Motor neuron (in vitro differentiated cells): ENCODE measurements at regions of chr11 and their contacts with region 1.

Region 1: DNA sequence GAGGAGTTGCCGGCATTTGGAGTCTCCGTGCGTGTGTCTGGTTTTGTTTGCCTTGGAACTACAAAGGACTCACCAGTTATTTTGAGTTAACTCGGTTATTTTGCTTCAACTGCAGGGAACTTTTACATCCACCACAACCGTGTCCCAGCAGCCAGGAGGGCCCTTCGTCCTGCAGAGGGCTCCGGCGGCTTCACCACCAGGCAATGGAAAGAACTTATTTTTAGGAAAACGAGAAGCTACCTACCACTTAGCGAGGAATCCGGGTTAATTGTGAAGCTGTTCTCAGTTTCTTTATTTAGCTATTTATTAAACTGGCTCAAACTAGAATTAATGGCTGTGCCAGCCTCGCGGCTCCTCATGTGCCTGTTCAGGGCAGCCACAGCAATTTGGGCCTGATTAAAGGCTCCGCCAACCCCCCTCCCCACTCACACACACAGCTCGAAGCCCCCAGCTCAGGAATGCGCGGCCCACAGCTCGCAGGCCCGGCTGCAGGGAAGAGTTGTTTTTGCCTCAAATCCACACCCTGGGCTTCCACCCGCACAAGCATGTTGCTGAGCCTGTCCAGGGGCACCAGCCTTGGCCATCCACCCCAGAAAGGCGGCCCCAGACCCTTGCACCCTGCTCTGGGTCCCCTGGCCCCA is 55.9 kb upstream of the FGF3 start:
- ATAC-seq: peak in 5 of 8 experiments; percentile 31 to 53 (median 47)
- H3K4me3 ChIP-seq: no peak overlapping the region
- H3K27ac ChIP-seq: no peak overlapping the region
- H3K4me1 ChIP-seq: peaks cover 5 to 7% of the 10 kb centered on the region in 2 donors

Region 2: GRCh38 chr11:69311767-69312385 is 563.2 kb before region 1 on chr11:
- in situ Hi-C with region 1: no loop called
- ATAC-seq: no peak
- H3K4me3 ChIP-seq: no peak overlapping the region
- H3K27ac ChIP-seq: no peak overlapping the region
- H3K4me1 ChIP-seq: no peaks in the 10 kb centered on the region

Region 3: GRCh38 chr11:69704508-69705253 is 170.4 kb before region 1 on chr11:
- in situ Hi-C with region 1: loop called (anchors 10 to 25 kb)
- ATAC-seq: peak; percentile 37 to 81 (median 60)
- H3K4me3 ChIP-seq: peak overlapping the region in 3 of 5 donors; percentile 1 to 21 (median 12)
- H3K27ac ChIP-seq: no peak overlapping the region
- H3K4me1 ChIP-seq: peaks cover 40 to 63% of the 10 kb centered on the region in 2 donors